Natural killer cell (primary cell): ENCODE measurements at regions of chr1 and their contacts with region 1.

Region 1: GRCh38 chr1:1906185-1907097 is 8.6 kb upstream of the CALML6 start:
- DNase-seq: peak; percentile 66 to 84
- ATAC-seq: peak; percentile 33 to 35 (median 34)
- H3K4me3 ChIP-seq: no peak overlapping the region
- H3K4me3 Mint-ChIP-seq: peak overlapping the region; percentile 70
- H3K27ac ChIP-seq: no peak overlapping the region
- H3K27ac Mint-ChIP-seq: peak overlapping the region; percentile 52 to 69
- H3K4me1 ChIP-seq: peaks cover 30% of the 10 kb centered on the region
- H3K4me1 Mint-ChIP-seq: peaks cover 16% of the 10 kb centered on the region in 2 donors
- H3K27me3 ChIP-seq: no peaks in the 10 kb centered on the region
- H3K27me3 Mint-ChIP-seq: no peaks in the 10 kb centered on the region
- CTCF ChIP-seq: peak; percentile 86

Region 2: GRCh38 chr1:1858382-1859086 is 47.9 kb before region 1 on chr1:
- intact Hi-C with region 1: loop called (anchors 5 kb)
- DNase-seq: peak in 1 of 2 donors; percentile 73
- ATAC-seq: peak in 2 of 3 donors; percentile 43 to 47
- H3K4me3 ChIP-seq: no peak overlapping the region
- H3K4me3 Mint-ChIP-seq: peak overlapping the region; percentile 50
- H3K27ac ChIP-seq: peak overlapping the region; percentile 28
- H3K27ac Mint-ChIP-seq: peak overlapping the region; percentile 63 to 80
- H3K4me1 ChIP-seq: peaks cover 62% of the 10 kb centered on the region
- H3K4me1 Mint-ChIP-seq: peaks cover 64 to 77% of the 10 kb centered on the region in 2 donors
- H3K27me3 ChIP-seq: no peaks in the 10 kb centered on the region
- H3K27me3 Mint-ChIP-seq: no peaks in the 10 kb centered on the region
- CTCF ChIP-seq: no peak

Region 3: GRCh38 chr1:1919304-1920056 is 13.0 kb after region 1 on chr1:
- intact Hi-C with region 1: loop called (anchors 1 kb)
- DNase-seq: peak; percentile 96 to 100
- ATAC-seq: peak; percentile 90 to 97 (median 92)
- H3K4me3 ChIP-seq: peak overlapping the region; percentile 29
- H3K4me3 Mint-ChIP-seq: peak overlapping the region; percentile 64
- H3K27ac ChIP-seq: peak overlapping the region; percentile 46
- H3K27ac Mint-ChIP-seq: peak overlapping the region; percentile 38 to 79
- H3K4me1 ChIP-seq: peaks cover 22% of the 10 kb centered on the region
- H3K4me1 Mint-ChIP-seq: peaks cover 0 to 7% of the 10 kb centered on the region in 2 donors
- H3K27me3 ChIP-seq: no peaks in the 10 kb centered on the region
- H3K27me3 Mint-ChIP-seq: no peaks in the 10 kb centered on the region
- CTCF ChIP-seq: no peak

Region 4: DNA sequence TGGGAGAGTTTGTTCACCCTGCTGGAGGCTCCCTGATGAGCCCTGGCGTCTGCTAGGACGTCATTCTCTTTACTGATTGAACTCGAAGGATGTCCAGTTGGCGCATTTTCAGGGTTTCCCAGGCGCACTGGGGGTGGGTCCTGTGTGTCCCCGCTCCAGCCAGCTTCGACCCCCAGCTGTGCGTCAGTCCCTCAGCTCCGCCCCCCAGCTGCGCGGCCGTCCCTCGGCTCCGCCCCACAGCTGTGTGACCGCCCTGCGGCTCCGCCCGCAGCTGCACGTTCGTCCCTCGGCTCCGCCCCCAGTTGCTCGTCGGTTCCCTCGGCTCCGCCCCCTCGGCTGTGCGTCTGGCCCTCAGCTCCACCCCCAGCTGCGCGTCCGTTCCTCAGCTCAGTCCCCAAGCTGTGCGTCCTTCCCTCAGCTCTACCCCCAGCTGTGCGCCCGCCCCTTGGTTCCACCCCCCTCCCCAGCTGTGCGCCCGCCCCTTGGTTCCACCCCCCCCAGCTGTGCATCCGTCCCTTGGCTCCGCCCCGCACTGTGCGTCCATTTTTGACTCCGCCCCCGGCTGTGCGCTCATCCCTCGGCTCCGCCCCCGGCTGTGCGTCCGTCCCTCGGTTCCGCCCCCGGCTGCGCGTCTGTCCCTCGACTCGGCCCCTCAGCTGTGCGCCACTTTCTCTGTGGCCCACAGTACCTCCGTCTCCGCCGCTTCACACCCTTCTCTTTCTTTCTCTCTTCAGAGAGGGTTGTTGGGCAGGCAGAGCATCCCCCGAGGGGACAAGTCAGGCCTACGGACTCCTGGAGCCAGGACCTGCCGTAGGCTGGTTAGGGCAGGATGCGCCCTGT is 226.8 kb after region 1 on chr1:
- intact Hi-C with region 1: loop called (anchors 1 kb)
- DNase-seq: peak; percentile 98 to 100
- ATAC-seq: peak; percentile 88 to 96 (median 89)
- H3K4me3 ChIP-seq: peak overlapping the region; percentile 50
- H3K4me3 Mint-ChIP-seq: peak overlapping the region; percentile 90
- H3K27ac ChIP-seq: peak overlapping the region; percentile 86
- H3K27ac Mint-ChIP-seq: peak overlapping the region; percentile 94
- H3K4me1 ChIP-seq: peaks cover 19% of the 10 kb centered on the region
- H3K4me1 Mint-ChIP-seq: peaks cover 12 to 13% of the 10 kb centered on the region in 2 donors
- H3K27me3 ChIP-seq: no peaks in the 10 kb centered on the region
- H3K27me3 Mint-ChIP-seq: no peaks in the 10 kb centered on the region
- CTCF ChIP-seq: no peak